GM10248 (cell line): ENCODE measurements at regions of chr6 and their contacts with region 1.

Region 1: DNA sequence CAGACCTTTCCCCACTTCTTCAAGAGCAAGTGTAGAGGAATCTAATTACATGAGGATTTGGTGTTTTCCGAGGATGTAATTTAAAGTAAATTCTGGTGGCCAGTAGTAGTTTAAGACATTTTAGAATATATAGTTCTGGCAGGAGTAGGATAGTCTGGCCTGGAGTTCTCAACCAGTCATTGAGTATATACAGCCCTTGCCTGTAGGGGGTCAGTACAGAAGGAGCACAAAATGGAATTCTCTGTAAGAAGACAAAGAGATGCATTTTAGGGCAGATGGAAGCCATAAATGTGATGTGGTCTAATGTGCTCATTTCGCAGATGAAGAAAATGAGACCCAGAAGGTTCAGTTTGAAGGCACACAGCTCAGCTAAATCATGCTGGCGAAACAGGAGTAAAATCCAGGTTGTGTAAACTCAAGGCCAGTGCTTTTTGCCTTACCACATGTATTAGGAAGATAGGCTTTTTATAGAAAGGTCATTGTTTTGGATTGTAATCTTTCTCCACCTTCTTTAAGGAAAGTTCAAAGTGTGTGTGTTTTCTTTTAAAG is 29.5 kb downstream of the QKI start:
- DNase-seq: no peak
- CTCF ChIP-seq: no peak

Region 2: GRCh38 chr6:163405412-163406309 is 38.4 kb before region 1 on chr6:
- CTCF ChIA-PET with region 1: no interaction called
- POLR2A ChIA-PET with region 1: no interaction called
- DNase-seq: peak; percentile 34
- CTCF ChIP-seq: no peak

Region 3: DNA sequence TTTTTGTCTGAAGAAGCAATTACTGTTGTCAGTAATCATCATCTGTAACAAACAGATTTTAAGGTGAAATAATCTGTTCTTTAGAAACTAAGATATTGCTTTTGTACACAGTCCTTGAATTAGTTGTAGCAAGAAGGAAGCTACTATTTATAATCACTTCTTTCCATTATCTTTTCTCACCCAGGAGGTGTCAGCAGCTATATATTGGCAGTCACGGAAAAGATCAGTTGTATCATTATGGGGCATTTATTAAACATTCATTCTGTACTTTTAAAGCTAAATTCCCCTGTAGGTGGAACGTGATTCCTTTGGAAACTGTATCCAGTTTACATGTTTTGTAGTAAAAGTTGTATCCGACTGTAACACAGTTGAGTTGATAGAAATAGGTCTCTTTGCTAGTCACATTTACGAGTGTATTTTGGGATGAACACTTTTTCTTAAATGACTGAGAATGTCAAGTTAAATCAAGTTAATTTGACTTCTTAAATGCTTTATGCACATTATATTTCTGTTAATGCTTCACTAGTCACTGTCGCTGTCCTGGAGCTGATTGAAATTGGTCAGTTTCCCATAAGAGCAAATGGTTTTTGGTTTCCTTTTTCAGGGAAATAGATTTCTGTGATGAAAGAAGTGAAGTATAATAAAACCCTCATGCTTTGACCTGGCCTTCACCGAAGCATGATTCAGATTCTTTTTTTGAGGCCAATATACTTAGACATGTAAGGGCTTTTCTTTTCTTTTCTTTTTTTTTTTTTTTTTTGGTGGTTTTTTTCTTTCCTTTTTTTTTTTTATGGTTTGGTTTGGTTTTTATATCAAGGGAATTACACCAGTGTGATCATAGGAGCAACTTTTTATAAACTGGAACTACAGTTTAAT is 24.4 kb before region 1 on chr6:
- CTCF ChIA-PET with region 1: interaction called, 4 read pairs
- POLR2A ChIA-PET with region 1: interaction called, 10 read pairs
- DNase-seq: no peak
- CTCF ChIP-seq: no peak

Region 4: DNA sequence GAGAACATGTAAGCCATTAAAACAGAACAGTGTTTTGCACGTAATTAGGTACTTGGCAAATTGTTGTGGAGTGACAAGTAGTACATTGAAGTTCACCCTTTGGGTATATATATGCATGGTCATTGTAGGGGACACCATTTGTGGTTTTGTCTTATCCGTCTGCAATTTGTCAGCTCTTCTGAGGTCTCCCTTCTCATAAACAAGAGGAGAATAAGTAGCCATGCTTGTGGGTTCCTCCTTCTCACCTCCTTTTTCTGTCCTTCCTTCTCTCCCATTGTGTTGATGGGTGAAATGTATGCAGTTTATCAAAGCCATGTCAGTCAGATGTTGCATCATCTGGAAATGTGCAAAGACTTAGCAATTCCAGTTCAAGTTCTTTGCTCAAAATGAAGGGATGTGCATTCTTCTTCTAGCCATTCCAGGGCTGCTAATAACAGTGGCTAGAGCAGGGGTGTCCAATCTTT is 41.4 kb after region 1 on chr6:
- CTCF ChIA-PET with region 1: no interaction called
- POLR2A ChIA-PET with region 1: no interaction called
- DNase-seq: no peak
- CTCF ChIP-seq: no peak